ENCODE measurements at regions of chr11 and their contacts with region 1.

Region 1: GRCh38 chr11:74018331-74019005 is 9.6 kb upstream of the UCP3 start:
- DNase-seq: peak; percentile 94 to 99
- ATAC-seq: peak; percentile 85 to 89
- H3K4me3 ChIP-seq: peak overlapping the region; percentile 9 to 34 (median 22)
- H3K27ac ChIP-seq: peak overlapping the region; percentile 88 to 99 (median 92)
- H3K4me1 ChIP-seq: peaks cover 34 to 37% of the 10 kb centered on the region in 2 donors
- H3K27me3 ChIP-seq: no peaks in the 10 kb centered on the region
- CTCF ChIP-seq: no peak
- POLR2A ChIP-seq: peak; percentile 59 to 68

Region 2: GRCh38 chr11:73982969-73983740 is 35.3 kb before region 1 on chr11:
- in situ Hi-C with region 1: no loop called
- intact Hi-C with region 1: loop called (anchors 1 kb)
- DNase-seq: peak; percentile 93 to 95
- ATAC-seq: peak; percentile 84 to 86
- H3K4me3 ChIP-seq: peak overlapping the region; percentile 66 to 88 (median 75)
- H3K27ac ChIP-seq: peak overlapping the region; percentile 93 to 99 (median 95)
- H3K4me1 ChIP-seq: peaks cover 12 to 36% of the 10 kb centered on the region in 2 donors
- H3K27me3 ChIP-seq: no peaks in the 10 kb centered on the region
- CTCF ChIP-seq: no peak
- POLR2A ChIP-seq: peak; percentile 74 to 92

Region 3: DNA sequence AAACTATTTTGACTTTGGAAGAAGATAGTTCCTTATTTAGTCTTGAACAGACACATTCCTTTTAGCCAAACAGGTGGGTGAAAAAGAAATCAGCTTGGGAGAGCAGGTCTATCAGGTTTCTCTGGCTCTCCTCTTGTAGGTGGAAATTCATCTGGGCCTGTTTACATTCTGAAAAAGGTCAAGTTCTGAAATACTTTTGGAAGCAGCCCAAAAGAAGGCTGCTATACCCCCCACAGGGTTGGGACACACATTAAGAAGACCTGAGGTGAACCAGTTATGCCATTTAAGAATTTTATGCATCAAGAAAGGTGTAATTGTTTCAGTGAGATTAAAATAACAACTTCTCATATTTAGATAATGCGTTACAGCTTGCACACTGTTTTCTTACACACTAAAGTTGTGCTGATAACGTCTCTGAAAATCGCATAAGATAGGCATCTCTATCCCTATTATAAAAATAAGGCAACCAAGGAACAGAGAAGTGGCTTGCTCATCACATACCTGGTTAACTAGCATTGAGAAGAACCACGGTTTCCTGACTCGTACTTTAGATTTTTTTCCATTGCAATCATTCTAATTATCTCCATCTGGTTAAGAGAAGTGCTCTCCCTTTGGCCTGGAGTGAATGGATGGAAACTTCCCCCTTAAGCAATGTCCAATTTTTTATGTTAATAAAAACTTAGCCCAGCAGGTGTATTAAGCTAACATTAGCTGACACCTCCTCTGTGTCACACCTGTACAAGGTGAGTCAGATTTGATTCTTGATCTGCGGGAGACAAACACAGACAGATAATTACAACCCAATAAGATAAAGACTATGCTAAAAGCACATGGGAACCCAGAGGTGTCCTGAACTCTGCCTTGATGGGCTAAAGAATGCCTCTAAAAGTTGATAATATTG is 50.9 kb after region 1 on chr11:
- in situ Hi-C with region 1: no loop called
- intact Hi-C with region 1: loop called (anchors 1 kb)
- DNase-seq: peak; percentile 28 to 39
- ATAC-seq: peak; percentile 73
- H3K4me3 ChIP-seq: peak overlapping the region; percentile 10 to 56 (median 32)
- H3K27ac ChIP-seq: peak overlapping the region; percentile 84 to 94 (median 90)
- H3K4me1 ChIP-seq: peaks cover 23 to 38% of the 10 kb centered on the region in 2 donors
- H3K27me3 ChIP-seq: no peaks in the 10 kb centered on the region
- CTCF ChIP-seq: no peak
- POLR2A ChIP-seq: peak in 1 of 2 donors; percentile 43

Region 4: DNA sequence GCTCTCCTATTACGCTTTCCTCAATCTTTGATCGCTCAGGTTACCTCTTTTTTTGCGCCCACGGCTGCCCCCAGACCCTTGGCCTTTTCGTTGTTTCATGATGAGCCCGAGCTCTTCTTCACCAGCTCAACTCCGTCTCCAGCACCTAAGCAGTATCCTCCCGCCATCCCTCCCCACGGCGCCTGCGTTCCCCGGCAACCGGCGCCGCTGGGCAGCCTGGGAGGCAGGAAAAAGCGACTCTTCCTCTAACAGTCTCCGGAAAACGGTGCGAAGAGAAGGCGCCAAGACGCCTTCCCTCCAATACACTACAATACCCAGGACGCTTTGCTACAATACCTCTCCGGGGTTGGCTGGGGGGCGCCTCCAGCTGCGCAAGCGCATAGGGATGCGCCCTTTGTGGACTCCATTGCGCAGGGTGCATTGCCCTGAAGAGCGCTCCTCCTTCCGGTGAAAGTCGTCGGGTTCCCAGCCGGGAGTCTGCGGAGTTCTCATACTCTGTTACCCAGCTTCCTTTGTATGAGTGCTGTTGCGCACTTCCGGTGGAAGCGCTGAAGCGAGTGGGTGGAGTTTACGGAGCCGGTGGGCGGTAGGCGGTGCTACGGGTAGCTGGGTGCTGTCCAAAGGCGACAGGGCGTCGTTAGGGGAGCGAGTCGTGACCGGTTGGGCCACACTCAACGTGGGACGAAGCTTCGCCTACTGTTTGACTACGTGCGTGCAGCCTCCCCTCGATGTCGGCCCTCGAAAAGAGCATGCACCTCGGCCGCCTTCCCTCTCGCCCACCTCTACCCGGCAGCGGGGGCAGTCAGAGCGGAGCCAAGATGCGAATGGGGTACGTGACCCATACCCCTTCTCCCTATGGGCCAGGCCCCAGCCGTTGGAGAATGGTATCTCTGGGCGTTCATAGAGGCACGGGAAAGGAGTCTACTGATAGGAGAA is 152.5 kb after region 1 on chr11 and contains the starts of genes C2CD3 and PPME1:
- in situ Hi-C with region 1: no loop called
- intact Hi-C with region 1: loop called (anchors 5 kb)
- DNase-seq: peak; percentile 97 to 99
- ATAC-seq: peak; percentile 96
- H3K4me3 ChIP-seq: peak within 1 kb of the TSS; percentile 66 to 93 (median 90)
- H3K27ac ChIP-seq: peak within 1 kb of the TSS; percentile 94 to 98 (median 96)
- H3K4me1 ChIP-seq: peaks cover 38 to 50% of the 10 kb centered on the region in 2 donors
- H3K27me3 ChIP-seq: no peaks in the 10 kb centered on the region
- CTCF ChIP-seq: peak in 3 of 5 experiments; percentile 14 to 40 (median 37)
- POLR2A ChIP-seq: peak; percentile 87 to 88
- total RNA-seq, gene C2CD3: 13.8 to 33.2 (median 16.4) TPM
- total RNA-seq, gene PPME1: 31.5 to 51.7 (median 43.2) TPM